ENCODE measurements at regions of chr15 and their contacts with region 1.

Region 1: DNA sequence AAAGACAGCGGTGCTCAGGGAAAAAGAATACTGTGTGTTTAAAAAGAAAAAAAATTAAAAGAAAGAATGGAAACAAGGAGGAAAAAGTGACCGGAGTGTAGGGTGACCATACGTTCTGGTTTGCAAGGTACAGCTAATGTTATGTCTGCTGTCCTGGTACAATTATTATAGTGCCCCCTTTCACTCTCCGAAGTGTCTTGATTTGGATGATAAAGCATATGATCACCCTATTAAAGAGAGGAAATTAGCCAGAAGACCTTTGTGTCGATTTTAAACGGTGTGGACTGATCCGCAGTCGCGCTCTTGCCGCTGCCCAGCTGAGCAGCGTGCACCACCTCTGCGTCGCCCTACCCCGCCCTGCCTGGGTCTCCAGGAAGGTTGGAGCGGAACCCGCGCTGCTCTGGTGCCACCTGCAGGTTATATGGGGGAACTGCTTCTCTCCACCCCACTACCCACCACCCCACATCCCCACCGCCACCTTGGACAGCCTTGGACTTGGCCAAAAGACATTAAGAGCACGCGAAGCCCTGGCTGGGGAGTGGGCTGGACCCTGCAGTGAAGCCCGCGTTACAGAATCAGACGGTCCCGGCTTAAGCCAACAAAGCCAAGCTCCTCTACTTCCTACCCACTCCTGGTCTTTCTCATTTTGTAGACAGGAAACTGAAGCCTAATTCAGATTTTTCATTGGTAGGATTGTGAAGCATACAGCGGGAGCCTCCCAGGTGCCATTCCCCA is 41.2 kb upstream of the UBE2Q2 start:
- DNase-seq: peak; percentile 87
- H3K4me3 Mint-ChIP-seq: peak overlapping the region; percentile 14
- H3K27ac Mint-ChIP-seq: no peak overlapping the region
- H3K4me1 Mint-ChIP-seq: peaks cover 13% of the 10 kb centered on the region
- H3K27me3 Mint-ChIP-seq: peaks cover 73% of the 10 kb centered on the region

Region 2: GRCh38 chr15:75468913-75469598 is 333.0 kb before region 1 on chr15:
- CTCF ChIA-PET with region 1: no interaction called
- DNase-seq: no peak
- H3K4me3 Mint-ChIP-seq: no peak overlapping the region
- H3K27ac Mint-ChIP-seq: peak overlapping the region; percentile 68
- H3K4me1 Mint-ChIP-seq: peaks cover 7% of the 10 kb centered on the region
- H3K27me3 Mint-ChIP-seq: no peaks in the 10 kb centered on the region

Region 3: GRCh38 chr15:75684642-75685041 is 117.4 kb before region 1 on chr15:
- CTCF ChIA-PET with region 1: interaction called, 46 read pairs
- DNase-seq: no peak
- H3K4me3 Mint-ChIP-seq: no peak overlapping the region
- H3K27ac Mint-ChIP-seq: no peak overlapping the region
- H3K4me1 Mint-ChIP-seq: no peaks in the 10 kb centered on the region
- H3K27me3 Mint-ChIP-seq: peaks cover 16% of the 10 kb centered on the region

Region 4: GRCh38 chr15:75727851-75728715 is 73.9 kb before region 1 on chr15:
- CTCF ChIA-PET with region 1: interaction called, 39 read pairs
- DNase-seq: peak; percentile 82
- H3K4me3 Mint-ChIP-seq: no peak overlapping the region
- H3K27ac Mint-ChIP-seq: no peak overlapping the region
- H3K4me1 Mint-ChIP-seq: peaks cover 18% of the 10 kb centered on the region
- H3K27me3 Mint-ChIP-seq: peaks cover 73% of the 10 kb centered on the region

Region 5: DNA sequence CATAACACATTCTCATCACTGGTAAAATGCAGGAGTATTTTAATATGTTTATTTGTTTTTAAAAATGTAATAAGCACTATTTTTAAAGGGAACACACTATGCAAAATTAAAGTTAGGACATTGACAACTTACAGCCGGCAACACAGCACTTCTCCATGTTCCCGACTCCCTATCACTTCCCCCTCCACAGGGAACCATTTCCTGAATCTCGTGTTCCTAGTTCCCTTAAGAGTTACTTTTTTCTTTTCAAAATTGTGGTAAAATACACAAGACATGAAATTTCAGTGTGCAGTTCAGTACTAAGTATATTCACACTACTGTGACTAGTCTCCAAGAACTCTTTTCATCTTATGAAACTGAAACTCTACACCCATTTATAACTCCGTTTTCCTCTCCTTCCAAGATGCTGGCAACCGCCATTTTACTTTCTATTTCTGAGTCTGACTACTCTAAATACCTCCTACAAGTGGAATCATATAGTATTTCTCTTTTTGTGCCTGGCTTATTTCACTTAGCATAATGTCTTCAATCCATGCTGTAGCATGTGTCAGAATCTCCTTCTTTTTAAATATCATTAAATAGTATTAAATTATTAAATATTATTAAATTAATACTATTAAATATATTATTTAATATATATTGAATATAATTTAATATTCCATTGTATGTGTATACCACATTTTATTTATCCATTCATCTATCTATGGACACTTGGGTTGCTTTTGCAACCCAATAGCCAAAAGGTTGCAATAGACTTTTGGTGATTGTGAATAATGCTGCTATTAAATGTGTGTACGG is 15.3 kb after region 1 on chr15:
- CTCF ChIA-PET with region 1: interaction called, 11 read pairs
- DNase-seq: peak; percentile 33
- H3K4me3 Mint-ChIP-seq: peak overlapping the region; percentile 39
- H3K27ac Mint-ChIP-seq: peak overlapping the region; percentile 85
- H3K4me1 Mint-ChIP-seq: peaks cover 30% of the 10 kb centered on the region
- H3K27me3 Mint-ChIP-seq: peaks cover 9% of the 10 kb centered on the region

Region 6: GRCh38 chr15:75921729-75922703 is 120.0 kb after region 1 on chr15:
- CTCF ChIA-PET with region 1: interaction called, 16 read pairs
- DNase-seq: peak; percentile 43
- H3K4me3 Mint-ChIP-seq: no peak overlapping the region
- H3K27ac Mint-ChIP-seq: no peak overlapping the region
- H3K4me1 Mint-ChIP-seq: peaks cover 21% of the 10 kb centered on the region
- H3K27me3 Mint-ChIP-seq: no peaks in the 10 kb centered on the region